Activated CD4-positive, alpha-beta memory T cell treated with anti-CD3 and anti-CD28 coated beads for 36 hours (primary cell): ENCODE measurements at regions of chr12 and their contacts with region 1.

Region 1: GRCh38 chr12:69254046-69254445 is 14.7 kb downstream of the CPSF6 start:
- DNase-seq: no peak
- H3K4me3 Mint-ChIP-seq: no peak overlapping the region
- H3K27ac Mint-ChIP-seq: peak overlapping the region; percentile 67
- H3K4me1 Mint-ChIP-seq: peaks cover 36% of the 10 kb centered on the region
- H3K27me3 Mint-ChIP-seq: no peaks in the 10 kb centered on the region

Region 2: DNA sequence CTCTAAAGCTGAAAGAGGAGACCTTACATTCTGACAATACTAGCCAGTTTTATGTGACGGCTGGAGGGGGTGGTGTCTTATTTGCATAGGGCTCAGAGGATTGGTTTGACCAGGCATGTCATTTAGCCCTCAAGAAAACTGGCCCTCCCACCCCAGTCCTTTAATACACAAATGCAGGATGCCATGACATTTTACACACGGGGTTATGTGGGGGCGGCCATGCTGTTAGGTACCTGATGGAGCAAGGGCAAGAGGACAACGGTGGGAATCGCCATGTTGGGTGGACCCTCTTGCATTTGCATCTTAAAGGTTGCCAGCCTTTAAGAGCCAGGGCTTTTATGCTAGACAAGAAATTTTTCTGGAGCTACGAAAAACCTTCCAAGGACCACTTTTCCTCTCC is 422.8 kb before region 1 on chr12:
- CTCF ChIA-PET with region 1: interaction called, 5 read pairs
- POLR2A ChIA-PET with region 1: no interaction called
- intact Hi-C with region 1: loop called (anchors 10 kb)
- DNase-seq: no peak
- H3K4me3 Mint-ChIP-seq: no peak overlapping the region
- H3K27ac Mint-ChIP-seq: no peak overlapping the region
- H3K4me1 Mint-ChIP-seq: peaks cover 15% of the 10 kb centered on the region
- H3K27me3 Mint-ChIP-seq: no peaks in the 10 kb centered on the region

Region 3: DNA sequence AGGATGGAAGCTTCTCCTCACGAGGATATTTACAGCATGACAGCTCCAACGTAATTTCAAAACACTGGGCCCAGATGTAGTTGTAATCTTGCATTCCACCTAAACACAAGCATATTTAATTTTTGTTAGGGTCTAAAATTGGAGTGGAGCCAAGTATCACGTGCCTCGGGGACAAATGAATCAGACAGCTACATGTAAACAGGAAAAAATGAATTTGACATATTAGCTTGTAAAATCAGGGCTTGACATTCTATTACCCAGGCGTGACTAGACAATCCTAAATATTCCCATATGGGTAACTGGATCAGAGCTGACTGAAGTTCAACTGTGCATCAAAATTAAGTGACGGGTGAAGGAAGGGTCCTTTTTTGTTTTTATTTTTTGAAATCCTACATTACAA is 387.1 kb before region 1 on chr12:
- CTCF ChIA-PET with region 1: interaction called, 3 read pairs
- POLR2A ChIA-PET with region 1: no interaction called
- intact Hi-C with region 1: loop called (anchors 2 kb)
- DNase-seq: no peak
- H3K4me3 Mint-ChIP-seq: no peak overlapping the region
- H3K27ac Mint-ChIP-seq: no peak overlapping the region
- H3K4me1 Mint-ChIP-seq: no peaks in the 10 kb centered on the region
- H3K27me3 Mint-ChIP-seq: no peaks in the 10 kb centered on the region

Region 4: DNA sequence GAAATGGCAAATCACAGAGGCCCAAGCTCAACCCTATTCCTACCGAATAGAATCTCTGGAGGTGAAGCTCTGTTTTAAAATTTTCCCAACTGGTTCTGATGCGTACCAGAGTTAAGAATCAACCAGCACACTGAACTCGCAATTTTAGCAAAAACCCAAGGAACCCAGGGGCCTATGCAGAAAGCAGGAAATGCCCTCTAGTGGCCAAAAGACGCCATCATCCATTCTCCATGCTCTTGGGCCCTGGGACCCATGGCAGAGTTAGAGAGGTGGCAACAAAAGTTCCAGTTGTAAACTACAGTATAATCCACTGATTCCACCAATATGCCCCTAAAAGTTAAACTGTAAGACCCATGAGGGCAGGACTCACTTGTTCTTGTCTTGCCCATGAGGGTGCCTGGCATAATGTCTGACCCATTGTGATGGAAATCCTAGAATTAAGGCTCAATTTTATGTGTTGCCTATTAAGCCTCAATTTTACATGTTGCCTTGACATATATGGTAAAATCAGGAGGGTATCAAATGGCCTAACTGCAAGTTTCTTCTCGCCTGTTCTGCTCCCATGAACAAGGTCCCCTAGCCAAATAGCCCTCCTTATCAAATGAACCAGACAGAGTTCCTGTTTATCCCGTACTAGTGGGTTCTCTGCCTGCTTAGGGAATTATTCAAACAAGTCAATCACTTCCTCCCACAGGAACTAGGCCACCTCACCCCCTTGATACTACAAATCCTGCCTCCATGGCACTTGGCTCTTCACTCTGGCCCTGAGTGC is 183.5 kb before region 1 on chr12:
- CTCF ChIA-PET with region 1: no interaction called
- POLR2A ChIA-PET with region 1: no interaction called
- intact Hi-C with region 1: loop called (anchors 5 kb)
- DNase-seq: peak; percentile 74
- H3K4me3 Mint-ChIP-seq: no peak overlapping the region
- H3K27ac Mint-ChIP-seq: no peak overlapping the region
- H3K4me1 Mint-ChIP-seq: peaks cover 15% of the 10 kb centered on the region
- H3K27me3 Mint-ChIP-seq: peaks cover 14% of the 10 kb centered on the region

Region 5: GRCh38 chr12:69239352-69239921 is 14.6 kb before region 1 on chr12 and contains the start of gene CPSF6:
- CTCF ChIA-PET with region 1: interaction called, 33 read pairs
- POLR2A ChIA-PET with region 1: interaction called, 4 read pairs
- intact Hi-C with region 1: loop called (anchors 1 kb)
- DNase-seq: peak; percentile 98
- H3K4me3 Mint-ChIP-seq: peak within 1 kb of the TSS; percentile 96
- H3K27ac Mint-ChIP-seq: peak within 1 kb of the TSS; percentile 99
- H3K4me1 Mint-ChIP-seq: peaks cover 46% of the 10 kb centered on the region
- H3K27me3 Mint-ChIP-seq: no peaks in the 10 kb centered on the region
- total RNA-seq, gene CPSF6: 86.6 to 90.0 TPM

Region 6: GRCh38 chr12:69266036-69266635 is 12.1 kb after region 1 on chr12:
- CTCF ChIA-PET with region 1: interaction called, 16 read pairs
- POLR2A ChIA-PET with region 1: no interaction called
- intact Hi-C with region 1: no loop called
- DNase-seq: no peak
- H3K4me3 Mint-ChIP-seq: no peak overlapping the region
- H3K27ac Mint-ChIP-seq: peak overlapping the region; percentile 15
- H3K4me1 Mint-ChIP-seq: peaks cover 14% of the 10 kb centered on the region
- H3K27me3 Mint-ChIP-seq: no peaks in the 10 kb centered on the region

Region 7: GRCh38 chr12:69275471-69275891 is 21.4 kb after region 1 on chr12:
- CTCF ChIA-PET with region 1: interaction called, 10 read pairs
- POLR2A ChIA-PET with region 1: no interaction called
- intact Hi-C with region 1: no loop called
- DNase-seq: no peak
- H3K4me3 Mint-ChIP-seq: no peak overlapping the region
- H3K27ac Mint-ChIP-seq: peak overlapping the region; percentile 21
- H3K4me1 Mint-ChIP-seq: peaks cover 44% of the 10 kb centered on the region
- H3K27me3 Mint-ChIP-seq: no peaks in the 10 kb centered on the region